Breast epithelium (tissue), 4 donors: ENCODE measurements at regions of chr1 and their contacts with region 1.

Region 1: DNA sequence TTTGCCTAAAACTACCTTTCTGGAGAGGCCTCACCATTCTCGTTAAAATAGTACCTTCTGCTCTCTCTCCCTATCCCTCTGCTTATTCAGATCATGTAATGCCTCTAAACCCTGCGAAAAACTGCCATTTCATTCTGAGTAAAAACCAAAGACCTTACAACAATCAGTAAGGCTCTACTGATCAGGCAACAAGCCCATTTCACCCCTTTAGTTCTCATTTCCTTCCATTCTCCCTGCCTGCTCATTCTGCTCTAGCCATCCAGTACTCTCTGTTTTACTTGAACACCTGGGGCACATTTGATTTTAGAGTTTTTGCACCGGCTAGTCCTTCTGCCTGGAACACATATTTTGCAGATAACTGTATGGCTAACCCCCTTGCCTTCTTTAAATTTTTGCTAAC is 187.8 kb downstream of the COQ8A start:
- DNase-seq: no peak
- H3K4me3 ChIP-seq: no peak overlapping the region
- H3K27ac ChIP-seq: no peak overlapping the region
- H3K4me1 ChIP-seq: no peaks in the 10 kb centered on the region
- H3K27me3 ChIP-seq: no peaks in the 10 kb centered on the region
- CTCF ChIP-seq: no peak
- POLR2A ChIP-seq: no peak

Region 2: DNA sequence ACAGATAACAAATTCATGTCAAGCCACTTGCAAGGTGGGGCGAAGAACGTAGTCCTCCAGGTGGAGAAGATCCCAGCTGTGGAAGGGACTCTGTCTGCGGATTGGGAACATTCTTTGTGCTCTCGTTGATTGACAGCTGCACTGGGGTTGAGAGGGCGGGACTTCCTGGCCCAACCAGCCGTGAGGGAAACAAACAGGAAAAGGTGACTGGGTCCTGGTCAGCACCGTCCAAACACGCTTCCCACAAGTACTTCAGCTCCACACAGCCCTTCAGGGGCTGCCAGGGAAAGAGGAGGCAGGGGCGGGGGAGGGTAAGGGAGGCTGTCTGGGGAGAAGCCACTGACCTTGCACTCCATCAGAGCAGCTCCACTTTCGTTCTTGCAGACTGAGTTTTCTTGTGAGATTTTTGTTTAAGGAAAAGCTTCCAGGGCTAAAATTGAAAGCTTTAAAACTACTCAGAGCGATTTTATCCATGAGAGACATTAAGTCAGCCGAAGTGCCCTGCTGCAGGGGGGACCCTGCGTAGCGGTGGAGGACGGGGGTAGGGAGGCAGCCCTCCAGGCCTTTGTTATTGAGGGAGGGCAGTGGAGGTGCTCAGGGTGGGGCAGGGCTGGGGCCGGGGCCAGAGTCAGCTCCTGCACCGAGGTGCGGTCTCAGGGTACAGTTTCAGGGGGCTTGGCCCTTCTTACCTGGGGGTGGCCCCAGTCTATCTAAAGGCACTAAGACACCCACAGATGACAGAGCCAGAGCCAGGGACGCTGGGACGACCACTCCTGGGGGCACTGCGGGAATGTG is 600.9 kb before region 1 on chr1:
- intact Hi-C with region 1: no loop called
- DNase-seq: no peak
- H3K4me3 ChIP-seq: no peak overlapping the region
- H3K27ac ChIP-seq: peak overlapping the region in 1 of 2 donors; percentile 25
- H3K4me1 ChIP-seq: no peaks in the 10 kb centered on the region
- H3K27me3 ChIP-seq: no peaks in the 10 kb centered on the region
- CTCF ChIP-seq: no peak
- POLR2A ChIP-seq: no peak

Region 3: DNA sequence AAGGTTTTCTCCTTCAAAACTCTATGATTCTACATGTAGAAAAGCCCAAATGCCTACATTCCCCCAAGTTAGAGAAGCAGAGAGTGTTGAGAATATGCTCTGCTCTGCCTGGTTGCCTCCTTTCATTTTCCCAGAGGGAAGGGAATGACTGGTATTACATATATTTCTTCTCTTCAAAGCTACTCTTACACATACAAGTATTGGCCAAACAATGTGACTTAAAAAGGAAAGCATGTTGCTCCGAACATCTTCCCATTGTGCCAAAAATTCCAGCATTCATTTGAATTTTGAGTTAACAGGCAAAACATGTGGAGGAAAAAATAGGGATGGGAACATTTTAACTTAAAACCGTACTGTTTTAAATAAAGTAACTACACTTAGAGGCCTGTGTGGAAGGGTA is 62.6 kb before region 1 on chr1:
- intact Hi-C with region 1: no loop called
- DNase-seq: no peak
- H3K4me3 ChIP-seq: no peak overlapping the region
- H3K27ac ChIP-seq: no peak overlapping the region
- H3K4me1 ChIP-seq: no peaks in the 10 kb centered on the region
- H3K27me3 ChIP-seq: no peaks in the 10 kb centered on the region
- CTCF ChIP-seq: no peak
- POLR2A ChIP-seq: no peak

Region 4: DNA sequence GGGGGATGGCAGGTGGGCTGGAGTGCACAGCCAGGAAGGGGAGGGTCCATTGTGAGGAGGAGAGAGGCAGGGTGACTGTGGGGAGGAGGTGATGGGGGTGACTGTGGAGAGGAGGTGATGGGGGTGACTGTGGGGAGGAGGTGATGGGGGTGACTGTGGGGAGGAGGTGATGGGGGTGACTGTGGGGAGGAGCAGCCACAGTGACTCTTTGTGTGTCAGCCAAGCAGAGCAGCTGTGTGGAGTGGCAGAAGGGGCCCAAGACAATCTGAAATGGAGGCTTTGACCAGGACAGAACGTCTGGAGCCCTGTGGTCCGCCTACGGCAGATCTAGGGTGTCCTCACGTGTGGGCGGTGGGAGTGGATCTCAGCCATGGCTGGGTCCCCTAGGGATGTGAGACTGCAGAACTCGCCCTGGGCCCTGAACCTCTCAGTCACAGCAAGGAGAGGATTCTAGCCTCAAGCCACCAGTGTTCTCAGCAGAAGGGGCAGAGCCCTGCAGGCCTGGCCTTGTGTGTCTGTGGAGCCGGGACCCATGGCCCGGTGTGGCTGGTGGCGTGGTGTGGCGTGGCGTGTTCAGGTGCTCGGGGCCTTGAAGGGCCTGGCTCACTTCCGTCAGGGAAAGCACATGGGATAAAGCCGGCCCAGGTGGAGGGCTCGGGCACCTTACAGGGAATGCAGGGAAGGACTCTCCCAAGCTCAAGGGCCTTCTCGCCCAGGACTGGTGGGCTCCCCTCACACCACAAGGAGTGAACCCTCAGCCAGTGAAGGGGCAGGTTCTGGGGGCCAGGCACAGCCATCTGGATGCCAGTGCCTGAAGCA is 1161.6 kb after region 1 on chr1:
- intact Hi-C with region 1: loop called (anchors 10 kb)
- DNase-seq: peak in 1 of 2 donors; percentile 39
- H3K4me3 ChIP-seq: no peak overlapping the region
- H3K27ac ChIP-seq: no peak overlapping the region
- H3K4me1 ChIP-seq: no peaks in the 10 kb centered on the region
- H3K27me3 ChIP-seq: no peaks in the 10 kb centered on the region
- CTCF ChIP-seq: no peak
- POLR2A ChIP-seq: no peak